ENCODE measurements at regions of chr11 and their contacts with region 1.

Region 1: DNA sequence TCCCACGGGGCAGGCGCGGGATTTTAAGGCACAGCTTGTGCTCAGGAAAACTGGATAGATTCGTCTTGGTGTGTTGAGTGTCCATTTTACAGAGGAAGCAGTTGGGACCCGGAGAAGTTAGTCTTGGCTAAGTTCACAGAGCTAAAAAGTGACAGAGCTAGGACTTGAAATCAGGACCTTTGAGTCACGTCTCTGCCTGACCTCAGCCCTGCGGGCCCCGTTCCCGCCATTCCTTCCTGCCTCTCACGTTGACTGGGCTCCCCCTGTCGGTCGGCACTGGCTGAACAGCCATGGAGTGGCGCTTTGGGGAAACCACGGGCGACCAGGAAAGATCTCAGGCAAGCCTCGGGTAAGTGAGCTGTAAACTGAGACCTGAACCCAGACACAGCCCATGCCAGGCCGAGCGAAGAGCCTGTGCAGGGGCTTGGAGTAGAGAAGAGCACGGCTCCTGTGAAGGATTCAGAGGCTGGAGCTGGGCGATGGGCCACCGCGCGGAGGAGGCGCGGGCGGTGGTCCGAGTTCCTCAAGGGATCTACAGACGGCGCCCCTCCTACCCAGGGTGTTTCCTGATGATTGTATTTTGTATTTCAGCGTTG is 54.1 kb downstream of the WNT11 start:
- DNase-seq: peak; percentile 84 to 93
- ATAC-seq: peak; percentile 91 to 96
- H3K4me3 ChIP-seq: no peak overlapping the region
- H3K27ac ChIP-seq: peak overlapping the region; percentile 40 to 63; a peak in 3 of 6 replicates
- H3K4me1 ChIP-seq: 0 out of 3 replicates have a peak, but pooled peaks cover 6% of the 10 kb centered on the region
- CTCF ChIP-seq: peak; percentile 92
- EP300 ChIP-seq: no peak
- POLR2A ChIP-seq: no peak
- RAD21 ChIP-seq: peak; percentile 95 to 98

Region 2: DNA sequence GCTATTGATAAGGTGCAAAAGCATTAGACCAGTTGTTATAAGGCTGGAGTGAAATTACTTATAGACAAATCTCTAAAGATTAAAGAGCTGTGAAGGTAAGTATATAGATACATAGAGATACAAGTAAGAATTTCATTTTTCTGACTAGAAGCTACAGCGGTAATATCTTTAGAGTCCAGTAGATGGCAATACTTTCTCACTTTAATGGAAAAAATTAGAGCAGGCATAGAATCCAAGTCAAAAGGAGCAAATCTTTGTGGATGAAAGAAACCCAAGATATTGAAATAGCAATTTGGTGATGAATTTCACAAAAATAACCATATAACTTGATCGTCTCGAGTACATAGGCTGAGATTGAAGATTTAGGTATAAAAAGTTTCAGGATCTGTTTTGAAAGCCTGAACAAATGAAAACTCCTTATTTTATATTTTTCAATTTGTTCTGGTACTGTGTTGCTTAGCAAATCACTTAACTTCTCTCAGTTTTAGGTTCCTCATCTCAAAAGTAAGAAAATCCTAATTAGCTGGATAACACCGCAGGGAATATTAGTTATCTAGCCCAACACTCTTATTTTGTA is 255.3 kb before region 1 on chr11:
- CTCF ChIA-PET with region 1: interaction called, 187 read pairs
- POLR2A ChIA-PET with region 1: interaction called, 3 read pairs
- DNase-seq: peak; percentile 25 to 41
- ATAC-seq: peak; percentile 50; a peak in 4 of 6 replicates
- H3K4me3 ChIP-seq: no peak overlapping the region
- H3K27ac ChIP-seq: no peak overlapping the region
- H3K4me1 ChIP-seq: no peaks in the 10 kb centered on the region
- CTCF ChIP-seq: peak; percentile 81
- EP300 ChIP-seq: no peak
- POLR2A ChIP-seq: no peak
- RAD21 ChIP-seq: peak; percentile 87 to 91

Region 3: GRCh38 chr11:76131671-76132631 is 20.2 kb before region 1 on chr11:
- CTCF ChIA-PET with region 1: interaction called, 28 read pairs
- POLR2A ChIA-PET with region 1: no interaction called
- DNase-seq: no peak
- ATAC-seq: no peak
- H3K4me3 ChIP-seq: no peak overlapping the region
- H3K27ac ChIP-seq: no peak overlapping the region
- H3K4me1 ChIP-seq: no peaks in the 10 kb centered on the region
- CTCF ChIP-seq: no peak
- EP300 ChIP-seq: no peak
- POLR2A ChIP-seq: no peak
- RAD21 ChIP-seq: no peak

Region 4: DNA sequence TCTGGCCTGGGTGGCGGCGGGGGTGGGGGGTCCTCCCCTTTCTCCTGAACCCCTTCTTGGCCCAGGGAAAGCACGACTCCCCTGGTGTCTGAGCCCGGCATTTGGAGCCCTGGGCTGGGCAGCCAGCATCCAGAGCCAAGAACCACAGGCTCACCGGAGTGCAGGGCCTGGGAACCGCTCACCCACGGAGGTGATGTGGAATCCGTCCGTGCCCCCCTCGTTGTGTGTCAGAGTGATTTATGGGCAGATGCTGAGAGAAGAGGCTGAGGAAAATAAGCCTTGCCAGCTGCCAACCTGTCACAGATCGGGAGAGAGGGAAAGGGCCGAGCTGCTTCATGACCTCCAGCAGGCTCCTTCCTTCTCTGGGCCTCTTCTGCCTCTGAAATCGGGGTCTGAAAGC is 20.4 kb after region 1 on chr11:
- CTCF ChIA-PET with region 1: interaction called, 11 read pairs
- POLR2A ChIA-PET with region 1: no interaction called
- DNase-seq: no peak
- ATAC-seq: no peak
- H3K4me3 ChIP-seq: no peak overlapping the region
- H3K27ac ChIP-seq: no peak overlapping the region
- H3K4me1 ChIP-seq: no peaks in the 10 kb centered on the region
- CTCF ChIP-seq: no peak
- EP300 ChIP-seq: no peak
- POLR2A ChIP-seq: no peak
- RAD21 ChIP-seq: no peak

Region 5: DNA sequence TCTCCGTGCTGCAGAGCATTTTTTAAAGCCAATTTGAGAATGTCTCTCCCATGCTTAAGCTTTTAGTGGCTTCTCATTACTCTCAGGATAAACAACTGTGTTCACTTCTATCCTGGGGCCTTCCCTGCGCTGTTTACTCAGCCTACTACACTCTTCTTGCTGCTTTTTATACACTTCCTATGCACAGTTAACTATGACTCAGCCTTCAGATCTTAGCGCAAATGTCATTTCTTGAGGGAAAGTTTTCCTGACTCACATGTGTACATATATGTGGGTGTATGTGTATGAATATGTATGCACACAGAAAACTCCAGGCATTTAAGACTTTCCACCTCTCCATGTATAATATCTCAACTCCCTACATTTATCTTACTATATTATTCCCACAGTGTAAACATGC is 219.0 kb after region 1 on chr11:
- CTCF ChIA-PET with region 1: no interaction called
- POLR2A ChIA-PET with region 1: no interaction called
- DNase-seq: peak; percentile 41 to 61
- ATAC-seq: peak; percentile 88 to 90
- H3K4me3 ChIP-seq: no peak overlapping the region
- H3K27ac ChIP-seq: peak overlapping the region in 1 of 2 experiments; percentile 27; a peak in 1 of 6 replicates
- H3K4me1 ChIP-seq: peaks cover 23% of the 10 kb centered on the region
- CTCF ChIP-seq: no peak
- EP300 ChIP-seq: no peak
- POLR2A ChIP-seq: no peak
- RAD21 ChIP-seq: no peak